A549 (cell line): ENCODE measurements at regions of chr10 and their contacts with region 1.

Region 1: GRCh38 chr10:91797874-91798648 is at the start of gene TNKS2:
- DNase-seq: peak; percentile 84 to 95
- ATAC-seq: peak; percentile 88 to 96
- H3K4me3 ChIP-seq: peak within 1 kb of the TSS; percentile 73
- H3K27ac ChIP-seq: peak within 1 kb of the TSS; percentile 93 to 97
- H3K4me1 ChIP-seq: peaks cover 33% of the 10 kb centered on the region
- CTCF ChIP-seq: no peak; the same call in 2 of the 3 replicates
- EP300 ChIP-seq: no peak
- POLR2A ChIP-seq: peak; percentile 92
- RAD21 ChIP-seq: no peak
- polyA plus RNA-seq, gene TNKS2: 40.4 and 45.3 TPM in 2 replicates

Region 2: DNA sequence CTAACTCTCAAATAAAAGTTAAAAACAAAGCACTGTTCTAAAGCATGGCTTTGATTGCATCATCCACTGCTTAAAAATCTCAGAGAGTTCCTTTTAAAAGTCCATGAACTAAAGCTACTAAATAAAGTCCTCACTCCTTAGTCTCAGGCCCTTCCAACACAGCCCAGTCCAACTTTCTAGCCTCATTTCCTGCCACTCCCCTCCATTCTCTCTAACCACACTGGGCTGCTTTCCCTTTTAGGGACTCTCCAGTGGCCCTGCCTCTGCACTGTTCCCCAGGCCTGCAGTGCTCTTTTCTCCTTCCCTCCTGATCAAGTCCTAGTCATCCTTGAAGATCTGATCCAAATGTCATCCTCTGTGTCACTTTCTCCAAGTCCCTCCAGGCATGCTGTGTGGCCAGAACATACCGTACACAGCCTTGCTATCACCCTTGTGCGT is 108.3 kb before region 1 on chr10:
- CTCF ChIA-PET with region 1: no interaction called
- POLR2A ChIA-PET with region 1: no interaction called
- DNase-seq: no peak
- ATAC-seq: no peak
- H3K4me3 ChIP-seq: no peak overlapping the region
- H3K27ac ChIP-seq: peak overlapping the region; percentile 46 to 50; a peak in 4 of 6 replicates
- H3K4me1 ChIP-seq: peaks cover 5% of the 10 kb centered on the region; the same call in 1 of the 3 replicates
- CTCF ChIP-seq: no peak
- EP300 ChIP-seq: no peak
- POLR2A ChIP-seq: no peak
- RAD21 ChIP-seq: no peak

Region 3: DNA sequence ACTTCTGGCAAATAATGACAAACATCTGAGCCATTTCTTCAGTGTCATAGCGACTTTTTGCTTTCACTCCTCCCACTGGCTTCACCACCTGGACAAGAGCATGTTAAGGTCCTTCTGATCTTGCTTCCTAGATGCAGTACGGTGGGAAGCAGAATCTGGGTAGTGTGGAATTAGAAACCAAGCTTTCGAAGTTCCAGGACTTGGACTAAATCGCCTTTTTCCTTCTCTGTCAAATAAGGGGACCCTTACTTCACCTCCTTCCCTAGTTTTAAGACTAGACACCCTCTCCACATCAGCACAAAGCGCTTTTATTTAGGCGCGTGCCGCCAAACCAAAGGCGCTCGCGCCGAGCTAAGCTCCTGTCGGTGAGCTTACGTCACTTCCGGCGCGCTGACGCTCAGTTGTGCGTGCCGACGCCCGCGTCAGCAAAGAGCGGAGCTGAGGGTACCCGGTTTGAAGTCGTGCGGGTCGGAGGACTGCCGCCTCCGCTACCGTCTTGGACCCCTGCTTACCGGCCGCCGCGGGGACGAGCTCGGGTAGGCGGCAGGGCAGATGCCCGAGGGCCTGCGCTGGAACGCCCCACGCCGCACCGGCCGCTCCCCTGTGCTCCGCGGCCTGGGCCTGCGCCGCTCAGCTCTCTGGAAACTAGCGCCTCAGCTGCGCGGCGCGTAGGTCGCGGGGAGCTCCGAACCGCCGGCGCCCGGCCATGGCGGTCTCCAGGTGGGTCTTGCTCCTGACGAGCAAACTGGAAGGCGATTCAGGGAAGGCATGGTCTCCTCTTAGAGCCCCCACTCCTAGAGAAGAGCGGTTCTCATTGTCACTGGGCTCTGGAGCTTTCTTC is 125.5 kb after region 1 on chr10 and contains the start of gene BTAF1:
- CTCF ChIA-PET with region 1: no interaction called
- POLR2A ChIA-PET with region 1: interaction called, 13 read pairs
- DNase-seq: peak; percentile 82 to 96
- ATAC-seq: peak; percentile 97 to 99
- H3K4me3 ChIP-seq: peak within 1 kb of the TSS; percentile 58
- H3K27ac ChIP-seq: peak within 1 kb of the TSS; percentile 83 to 94
- H3K4me1 ChIP-seq: peaks cover 14% of the 10 kb centered on the region; the same call in 2 of the 3 replicates
- CTCF ChIP-seq: no peak
- EP300 ChIP-seq: no peak
- POLR2A ChIP-seq: peak; percentile 94
- RAD21 ChIP-seq: no peak
- polyA plus RNA-seq, gene BTAF1: 43.6 and 54.7 TPM in 2 replicates

Region 4: GRCh38 chr10:91953600-91954160 is 155.6 kb after region 1 on chr10:
- CTCF ChIA-PET with region 1: no interaction called
- POLR2A ChIA-PET with region 1: no interaction called
- DNase-seq: no peak
- ATAC-seq: no peak
- H3K4me3 ChIP-seq: no peak overlapping the region
- H3K27ac ChIP-seq: no peak overlapping the region
- H3K4me1 ChIP-seq: 0 out of 3 replicates have a peak, but pooled peaks cover 8% of the 10 kb centered on the region
- CTCF ChIP-seq: no peak
- EP300 ChIP-seq: no peak
- POLR2A ChIP-seq: no peak
- RAD21 ChIP-seq: no peak